ENCODE measurements at regions of chr7 and their contacts with region 1.

Region 1: DNA sequence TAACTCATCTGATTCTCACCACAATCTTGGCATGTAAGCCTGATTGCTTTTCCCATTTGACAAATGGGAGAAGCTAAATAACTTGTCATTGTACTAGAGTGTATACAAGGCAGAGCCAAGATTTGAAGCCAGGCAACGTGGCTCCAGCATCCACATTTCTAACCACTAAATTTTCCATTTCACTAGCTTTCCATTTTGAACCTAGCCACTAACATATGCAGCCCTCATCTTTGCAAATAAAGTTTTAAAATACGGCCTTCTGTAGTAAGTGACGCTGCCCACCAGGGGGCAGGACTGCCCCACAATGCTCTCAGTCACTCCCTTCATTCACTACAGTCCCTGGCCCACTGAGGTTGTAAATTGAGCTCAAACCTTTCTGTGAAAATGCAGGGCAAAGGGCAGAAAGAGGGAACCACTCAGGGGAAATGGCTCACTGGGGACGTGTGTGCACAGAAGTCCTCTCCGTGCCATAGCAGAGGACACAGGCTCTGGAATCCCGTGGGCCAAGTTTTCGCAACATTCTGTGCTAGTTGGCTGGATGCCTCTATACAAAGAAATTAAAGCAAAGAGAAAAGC is 315.7 kb downstream of the TNS3 start:
- DNase-seq: peak; percentile 69
- H3K4me3 ChIP-seq: no peak overlapping the region
- H3K27ac ChIP-seq: no peak overlapping the region
- H3K4me1 ChIP-seq: no peaks in the 10 kb centered on the region
- H3K27me3 ChIP-seq: no peaks in the 10 kb centered on the region
- CTCF ChIP-seq: peak; percentile 87 to 88
- POLR2A ChIP-seq: no peak

Region 2: GRCh38 chr7:47254081-47255006 is 11.9 kb before region 1 on chr7:
- CTCF ChIA-PET with region 1: interaction called, 22 read pairs
- POLR2A ChIA-PET with region 1: no interaction called
- dilution Hi-C with region 1: no loop called
- intact Hi-C with region 1: no loop called
- DNase-seq: peak; percentile 55
- H3K4me3 ChIP-seq: peak overlapping the region; percentile 59 to 69 (median 68)
- H3K27ac ChIP-seq: peak overlapping the region; percentile 58
- H3K4me1 ChIP-seq: peaks cover 15% of the 10 kb centered on the region
- H3K27me3 ChIP-seq: peaks cover 0 to 1% of the 10 kb centered on the region in 2 experiments
- CTCF ChIP-seq: peak; percentile 64 to 90
- POLR2A ChIP-seq: no peak

Region 3: GRCh38 chr7:47371729-47372368 is 105.6 kb after region 1 on chr7:
- CTCF ChIA-PET with region 1: interaction called, 6 read pairs
- POLR2A ChIA-PET with region 1: no interaction called
- dilution Hi-C with region 1: no loop called
- intact Hi-C with region 1: loop called (anchors 5 kb)
- DNase-seq: peak; percentile 32
- H3K4me3 ChIP-seq: no peak overlapping the region
- H3K27ac ChIP-seq: no peak overlapping the region
- H3K4me1 ChIP-seq: no peaks in the 10 kb centered on the region
- H3K27me3 ChIP-seq: no peaks in the 10 kb centered on the region
- CTCF ChIP-seq: no peak
- POLR2A ChIP-seq: no peak

Region 4: DNA sequence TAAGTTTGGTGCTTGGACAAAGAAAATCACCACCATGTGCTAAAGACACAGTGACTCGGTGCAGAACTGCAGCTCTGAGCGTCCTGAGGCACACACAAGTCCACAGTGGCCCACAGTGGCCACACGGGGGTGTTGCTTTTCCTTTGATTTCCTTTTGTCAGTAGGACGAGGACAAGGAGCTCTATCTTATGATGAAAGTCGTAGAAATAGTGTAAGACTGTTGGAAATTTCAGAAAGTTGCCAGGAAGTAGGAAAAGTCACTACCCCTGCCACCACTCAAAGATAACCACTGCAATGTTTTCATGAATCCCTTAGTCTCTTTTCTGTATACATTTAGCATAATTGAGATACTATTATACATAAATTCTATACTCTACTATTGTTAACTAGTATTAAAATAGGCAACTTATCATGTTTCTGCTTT is 169.7 kb after region 1 on chr7:
- CTCF ChIA-PET with region 1: interaction called, 87 read pairs
- POLR2A ChIA-PET with region 1: interaction called, 3 read pairs
- dilution Hi-C with region 1: no loop called
- intact Hi-C with region 1: loop called (anchors 1 kb)
- DNase-seq: peak; percentile 68
- H3K4me3 ChIP-seq: no peak overlapping the region
- H3K27ac ChIP-seq: no peak overlapping the region
- H3K4me1 ChIP-seq: no peaks in the 10 kb centered on the region
- H3K27me3 ChIP-seq: no peaks in the 10 kb centered on the region
- CTCF ChIP-seq: peak; percentile 78 to 82
- POLR2A ChIP-seq: no peak

Region 5: DNA sequence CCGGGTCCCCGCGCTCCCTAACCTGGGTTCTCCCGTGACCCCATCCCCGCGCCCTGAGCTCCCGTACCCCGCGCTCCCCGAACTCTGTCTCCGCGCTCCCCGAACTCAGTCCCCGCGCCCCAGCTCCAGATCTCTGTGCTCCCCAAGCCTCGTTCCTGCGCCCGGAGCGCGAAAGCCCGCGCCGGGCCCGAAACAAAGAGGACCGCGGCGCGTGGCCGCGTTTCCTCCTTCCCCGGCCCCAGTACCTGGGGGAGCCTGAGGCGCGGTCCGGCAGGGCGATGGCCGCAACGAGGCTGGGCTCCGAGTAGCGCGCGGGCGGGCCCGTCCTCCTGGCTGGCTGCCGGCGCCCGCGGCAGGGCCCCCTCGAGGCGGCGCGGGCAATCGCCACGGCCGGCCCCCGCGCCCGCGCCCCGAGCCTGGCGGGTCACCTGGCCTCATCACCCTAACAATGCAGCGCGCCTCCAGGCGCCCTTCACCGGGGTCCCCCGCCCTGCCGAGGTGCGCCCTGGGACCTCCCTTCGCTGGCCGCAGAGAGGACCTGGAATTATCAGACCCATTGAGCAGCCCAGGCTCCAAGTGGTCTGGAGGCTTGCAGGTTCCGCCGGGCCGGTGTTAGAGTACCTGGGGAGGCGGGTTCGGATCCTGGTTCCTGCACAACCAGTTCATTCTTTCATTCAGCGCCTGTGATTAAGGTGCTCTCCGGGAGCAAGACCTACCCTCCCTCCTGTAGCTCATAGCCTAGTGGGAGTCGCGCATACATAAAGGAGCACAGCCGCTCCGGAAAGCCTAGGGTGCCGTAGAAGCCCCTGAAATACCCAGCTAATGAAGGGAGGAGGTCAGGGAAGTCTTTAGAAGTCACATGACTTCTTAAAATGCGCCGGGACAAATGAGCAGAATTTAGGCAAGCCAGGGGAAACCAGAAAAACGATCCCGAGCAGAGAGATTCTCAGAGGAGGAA is 315.9 kb after region 1 on chr7 and contains the start of gene TNS3:
- CTCF ChIA-PET with region 1: interaction called, 7 read pairs
- POLR2A ChIA-PET with region 1: no interaction called
- dilution Hi-C with region 1: no loop called
- intact Hi-C with region 1: loop called (anchors 10 kb)
- DNase-seq: no peak
- H3K4me3 ChIP-seq: peak within 1 kb of the TSS; percentile 56 to 74 (median 69)
- H3K27ac ChIP-seq: no peak within 1 kb of the TSS
- H3K4me1 ChIP-seq: peaks cover 18% of the 10 kb centered on the region
- H3K27me3 ChIP-seq: peaks cover 6 to 8% of the 10 kb centered on the region in 2 experiments
- CTCF ChIP-seq: peak; percentile 7 to 17
- POLR2A ChIP-seq: no peak
- total RNA-seq, gene TNS3: 45.1 and 59.8 TPM in 2 replicates

Region 6: GRCh38 chr7:47818796-47819606 is 552.8 kb after region 1 on chr7:
- CTCF ChIA-PET with region 1: interaction called, 137 read pairs
- POLR2A ChIA-PET with region 1: no interaction called
- dilution Hi-C with region 1: no loop called
- intact Hi-C with region 1: loop called (anchors 1 kb)
- DNase-seq: peak; percentile 71
- H3K4me3 ChIP-seq: no peak overlapping the region
- H3K27ac ChIP-seq: no peak overlapping the region
- H3K4me1 ChIP-seq: no peaks in the 10 kb centered on the region
- H3K27me3 ChIP-seq: no peaks in the 10 kb centered on the region
- CTCF ChIP-seq: peak; percentile 79 to 93
- POLR2A ChIP-seq: no peak

Region 7: GRCh38 chr7:48109848-48110663 is 843.8 kb after region 1 on chr7:
- CTCF ChIA-PET with region 1: interaction called, 10 read pairs
- POLR2A ChIA-PET with region 1: no interaction called
- dilution Hi-C with region 1: no loop called
- intact Hi-C with region 1: loop called (anchors 10 kb)
- DNase-seq: peak; percentile 69
- H3K4me3 ChIP-seq: no peak overlapping the region
- H3K27ac ChIP-seq: no peak overlapping the region
- H3K4me1 ChIP-seq: no peaks in the 10 kb centered on the region
- H3K27me3 ChIP-seq: no peaks in the 10 kb centered on the region
- CTCF ChIP-seq: peak; percentile 97
- POLR2A ChIP-seq: no peak

Measured in endothelial cell of umbilical vein (primary cell).